ENCODE measurements at regions of chr1 and their contacts with region 1.

Region 1: DNA sequence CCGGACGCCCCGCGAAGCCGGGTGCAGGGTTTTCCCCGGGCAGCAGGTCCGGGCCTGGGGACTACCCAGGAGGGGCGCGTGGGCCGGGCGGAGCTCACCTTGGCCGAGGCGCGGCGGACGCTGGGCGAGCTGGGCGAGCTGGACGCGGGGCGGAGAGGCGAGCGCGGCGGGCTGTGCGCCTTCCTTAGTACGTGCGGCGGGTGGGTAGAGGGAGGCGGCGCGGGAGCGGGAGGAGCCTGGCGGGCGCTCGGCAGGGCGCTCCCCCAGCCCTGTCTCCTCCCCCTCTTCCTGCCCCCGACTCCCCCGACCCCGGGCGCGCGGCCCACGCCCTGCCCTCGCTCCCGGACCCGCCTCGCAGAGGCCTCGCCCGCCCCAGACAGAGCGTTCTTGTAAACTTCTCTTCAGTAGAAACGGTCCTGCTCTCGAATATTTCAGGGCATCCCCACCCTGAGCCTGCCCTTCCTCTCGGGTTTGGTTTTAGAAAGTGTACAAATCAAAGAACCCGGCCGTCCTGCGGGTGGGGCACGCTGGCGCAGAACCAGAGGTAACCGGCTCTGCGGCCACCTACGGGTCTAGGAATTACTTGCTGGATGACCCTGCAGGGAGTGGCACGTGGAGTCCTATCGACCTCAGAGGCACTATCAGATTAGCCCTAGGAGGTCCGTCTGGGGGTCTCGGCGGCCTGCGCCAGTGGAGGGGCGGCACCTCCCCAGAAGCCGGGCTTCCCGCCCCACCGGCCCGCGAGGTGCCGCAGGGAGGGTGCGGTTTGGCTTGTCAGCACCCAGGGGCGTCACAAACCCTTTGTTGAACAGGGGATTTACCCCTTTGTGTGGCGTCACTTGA is at the start of gene S100A10:
- DNase-seq: peak in 1 of 2 experiments; percentile 88
- ATAC-seq: peak; percentile 51 to 67
- H3K4me3 ChIP-seq: peak within 1 kb of the TSS; percentile 87
- H3K27ac ChIP-seq: peak within 1 kb of the TSS; percentile 97
- H3K4me1 ChIP-seq: peaks cover 59% of the 10 kb centered on the region
- CTCF ChIP-seq: no peak
- EP300 ChIP-seq: no peak
- POLR2A ChIP-seq: peak; percentile 89
- RAD21 ChIP-seq: no peak; a peak in 1 of 5 replicates
- polyA plus RNA-seq, gene S100A10: 505 and 515 TPM in 2 replicates

Region 2: GRCh38 chr1:151594143-151594625 is 399.7 kb before region 1 on chr1:
- CTCF ChIA-PET with region 1: no interaction called
- POLR2A ChIA-PET with region 1: no interaction called
- DNase-seq: peak; percentile 80
- ATAC-seq: peak; percentile 67 to 75; a peak in 5 of 6 replicates
- H3K4me3 ChIP-seq: no peak overlapping the region
- H3K27ac ChIP-seq: peak overlapping the region; percentile 8 to 15; a peak in 2 of 6 replicates
- H3K4me1 ChIP-seq: peaks cover 27% of the 10 kb centered on the region
- CTCF ChIP-seq: peak; percentile 91
- EP300 ChIP-seq: no peak
- POLR2A ChIP-seq: no peak
- RAD21 ChIP-seq: peak; percentile 86 to 89

Region 3: GRCh38 chr1:151976858-151977257 is 17.0 kb before region 1 on chr1:
- CTCF ChIA-PET with region 1: interaction called, 1,410 read pairs
- POLR2A ChIA-PET with region 1: interaction called, 151 read pairs
- DNase-seq: peak; percentile 53 to 62
- ATAC-seq: peak; percentile 54 to 56
- H3K4me3 ChIP-seq: no peak overlapping the region
- H3K27ac ChIP-seq: peak overlapping the region; percentile 89 to 94
- H3K4me1 ChIP-seq: peaks cover 95% of the 10 kb centered on the region
- CTCF ChIP-seq: no peak
- EP300 ChIP-seq: no peak
- POLR2A ChIP-seq: no peak
- RAD21 ChIP-seq: no peak; a peak in 1 of 5 replicates